HepG2 (cell line): ENCODE measurements at regions of chr10 and their contacts with region 1.

Region 1: DNA sequence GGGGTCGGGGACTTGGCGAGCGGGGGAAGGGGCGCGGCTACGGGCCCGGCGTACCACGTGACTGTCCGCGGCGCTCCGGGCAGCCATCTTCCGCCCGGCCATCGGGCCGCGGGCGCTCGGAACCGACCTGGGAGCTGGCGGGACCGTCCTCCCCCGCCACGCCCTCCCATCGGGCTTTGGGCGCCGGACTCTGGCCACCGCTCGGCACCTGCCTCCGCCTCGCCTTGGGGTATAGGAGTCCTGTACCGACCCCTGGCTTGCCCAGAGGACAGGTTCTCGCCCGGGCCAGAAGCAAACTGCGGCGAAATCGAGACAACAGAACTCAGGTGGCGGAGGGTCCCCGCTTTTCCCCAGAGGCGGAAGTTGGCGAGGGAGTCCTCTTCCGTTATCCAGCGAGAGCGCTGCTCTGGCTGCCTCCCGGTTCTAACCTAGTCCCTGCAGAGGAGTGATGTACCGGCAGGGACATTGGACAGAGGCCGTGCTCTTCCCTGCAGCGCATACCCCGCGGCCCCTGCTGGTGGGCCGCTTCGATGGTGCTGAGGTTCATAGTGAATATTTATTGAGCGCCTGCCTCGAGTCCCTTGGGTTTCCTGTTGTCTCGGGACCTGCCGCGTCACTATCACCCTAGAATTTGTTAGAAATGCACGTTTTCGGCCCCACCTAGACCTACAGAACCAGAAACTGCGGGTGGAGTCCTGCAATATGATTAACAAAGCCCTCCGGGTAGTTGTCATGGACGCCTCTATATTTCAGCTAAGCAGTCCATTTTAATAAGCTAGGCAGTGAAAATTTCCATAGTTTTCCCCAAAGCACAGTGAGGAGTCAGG is 1.3 kb upstream of the SGMS1 start:
- DNase-seq: peak; percentile 81
- ATAC-seq: peak; percentile 78
- H3K4me3 ChIP-seq: peak overlapping the region; percentile 64 to 88 (median 86)
- H3K27ac ChIP-seq: peak overlapping the region; percentile 99
- H3K4me1 ChIP-seq: peaks cover 26% of the 10 kb centered on the region
- H3K27me3 ChIP-seq: no peaks in the 10 kb centered on the region; a peak in 1 of 5 replicates
- CTCF ChIP-seq: peak; percentile 62
- EP300 ChIP-seq: no peak
- POLR2A ChIP-seq: peak; percentile 77 to 82
- RAD21 ChIP-seq: peak; percentile 44; the same call in 1 of the 2 replicates

Region 2: DNA sequence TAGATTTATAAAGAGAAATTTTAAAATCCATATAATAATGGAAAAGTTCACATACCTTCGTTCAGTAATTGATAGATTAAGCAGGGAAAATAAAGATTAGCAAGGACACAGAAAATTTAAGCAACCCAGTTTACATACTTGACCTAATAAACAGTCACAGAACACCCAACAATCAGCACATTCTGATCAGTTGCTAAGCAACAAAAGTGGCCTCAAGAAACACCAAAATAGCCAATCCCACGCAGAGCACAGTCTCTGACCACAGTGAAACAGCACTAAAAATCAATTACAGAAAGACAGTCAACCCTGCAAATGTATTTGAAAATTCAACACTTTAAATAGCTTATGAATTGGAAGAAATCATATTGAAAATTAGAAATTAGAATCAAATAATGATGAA is 1189.9 kb before region 1 on chr10:
- CTCF ChIA-PET with region 1: no interaction called
- POLR2A ChIA-PET with region 1: no interaction called
- in situ Hi-C with region 1: no loop called
- intact Hi-C with region 1: no loop called
- DNase-seq: no peak
- ATAC-seq: no peak
- H3K4me3 ChIP-seq: no peak overlapping the region
- H3K27ac ChIP-seq: no peak overlapping the region
- H3K4me1 ChIP-seq: peaks cover 10% of the 10 kb centered on the region; the same call in 1 of the 2 replicates
- H3K27me3 ChIP-seq: no peaks in the 10 kb centered on the region
- CTCF ChIP-seq: no peak
- EP300 ChIP-seq: no peak
- POLR2A ChIP-seq: no peak
- RAD21 ChIP-seq: no peak

Region 3: GRCh38 chr10:50367732-50368131 is 257.3 kb before region 1 on chr10:
- CTCF ChIA-PET with region 1: interaction called, 4 read pairs
- POLR2A ChIA-PET with region 1: no interaction called
- in situ Hi-C with region 1: no loop called
- intact Hi-C with region 1: loop called (anchors 2 kb)
- DNase-seq: peak; percentile 35
- ATAC-seq: peak; percentile 88
- H3K4me3 ChIP-seq: no peak overlapping the region
- H3K27ac ChIP-seq: no peak overlapping the region
- H3K4me1 ChIP-seq: no peaks in the 10 kb centered on the region
- H3K27me3 ChIP-seq: no peaks in the 10 kb centered on the region
- CTCF ChIP-seq: peak; percentile 72
- EP300 ChIP-seq: no peak
- POLR2A ChIP-seq: no peak
- RAD21 ChIP-seq: peak; percentile 56; the same call in 1 of the 2 replicates

Region 4: DNA sequence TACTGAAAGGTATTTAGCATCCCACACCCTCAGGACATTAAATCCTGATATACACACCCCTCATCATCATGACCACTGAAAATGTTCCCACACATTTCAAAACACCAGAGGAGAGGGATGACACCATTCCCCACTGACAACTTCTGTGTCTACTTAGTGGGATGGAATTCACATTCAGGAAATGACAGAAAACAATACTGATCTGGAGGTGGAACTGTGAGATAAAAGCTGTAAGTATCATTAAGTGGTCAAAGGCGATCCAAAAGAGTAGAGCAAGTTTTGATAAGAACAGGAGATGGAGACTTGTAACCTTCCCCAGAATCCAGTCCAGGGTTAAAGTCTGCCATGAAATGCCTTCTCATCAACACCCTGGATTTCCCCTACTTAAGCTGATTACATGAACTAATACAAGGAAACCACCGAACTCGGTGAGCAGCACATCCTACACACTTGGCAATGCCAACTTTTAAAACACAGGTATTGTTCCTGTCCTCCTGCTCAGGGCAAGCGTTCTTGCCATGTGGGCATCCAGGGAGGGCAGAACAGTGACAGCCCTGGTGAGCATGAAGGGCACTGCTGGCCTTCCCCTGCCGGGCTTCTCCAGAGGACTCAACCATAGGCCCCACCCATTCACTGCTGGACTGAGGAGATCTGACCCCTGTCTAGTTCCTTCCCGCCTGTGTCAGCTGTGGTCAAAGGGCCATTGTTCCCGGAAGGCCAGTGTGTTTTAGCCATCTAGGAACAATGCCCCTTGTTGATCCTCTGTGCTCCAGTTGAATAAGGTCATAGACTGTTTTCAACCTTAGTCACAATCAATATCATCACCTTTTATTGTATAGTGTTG is 86.3 kb before region 1 on chr10:
- CTCF ChIA-PET with region 1: no interaction called
- POLR2A ChIA-PET with region 1: interaction called, 10 read pairs
- in situ Hi-C with region 1: no loop called
- intact Hi-C with region 1: loop called (anchors 1 kb)
- DNase-seq: peak; percentile 92
- ATAC-seq: peak; percentile 99
- H3K4me3 ChIP-seq: peak overlapping the region in 1 of 3 experiments; percentile 18; a peak in 1 of 6 replicates
- H3K27ac ChIP-seq: peak overlapping the region; percentile 29
- H3K4me1 ChIP-seq: peaks cover 21% of the 10 kb centered on the region
- H3K27me3 ChIP-seq: no peaks in the 10 kb centered on the region
- CTCF ChIP-seq: peak; percentile 10; the same call in 1 of the 2 replicates
- EP300 ChIP-seq: peak in 1 of 2 experiments; percentile 55; a peak in 1 of 4 replicates
- POLR2A ChIP-seq: no peak
- RAD21 ChIP-seq: no peak

Region 5: DNA sequence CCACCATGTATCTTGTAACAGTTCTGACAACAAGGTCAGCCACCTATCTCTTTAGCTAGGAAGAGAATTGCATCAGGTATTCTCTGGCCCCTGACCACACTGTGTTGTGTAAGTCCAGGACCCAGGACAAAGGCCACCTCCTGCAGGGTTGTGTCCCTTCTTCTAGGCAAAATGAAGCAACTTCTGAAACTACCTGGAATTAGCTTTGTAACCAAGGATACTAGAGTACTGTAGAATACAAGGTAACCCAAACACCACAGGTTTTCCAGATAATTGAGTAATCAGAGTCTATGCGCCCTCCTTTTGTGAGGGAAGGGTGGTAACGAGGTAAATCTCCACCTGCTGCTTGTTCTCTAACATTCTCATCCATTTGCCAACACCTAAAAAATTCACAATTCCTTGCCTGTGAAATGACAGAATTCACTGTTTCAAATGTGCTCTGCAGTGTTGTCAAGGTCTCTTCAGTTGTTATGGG is 53.0 kb before region 1 on chr10:
- CTCF ChIA-PET with region 1: no interaction called
- POLR2A ChIA-PET with region 1: interaction called, 34 read pairs
- in situ Hi-C with region 1: no loop called
- intact Hi-C with region 1: loop called (anchors 1 kb)
- DNase-seq: peak; percentile 92
- ATAC-seq: peak; percentile 99
- H3K4me3 ChIP-seq: no peak overlapping the region; a peak in 1 of 6 replicates
- H3K27ac ChIP-seq: peak overlapping the region; percentile 92
- H3K4me1 ChIP-seq: peaks cover 47% of the 10 kb centered on the region
- H3K27me3 ChIP-seq: no peaks in the 10 kb centered on the region
- CTCF ChIP-seq: no peak
- EP300 ChIP-seq: peak; percentile 93 to 97
- POLR2A ChIP-seq: no peak
- RAD21 ChIP-seq: no peak

Region 6: GRCh38 chr10:50605269-50606263 is 19.5 kb before region 1 on chr10:
- CTCF ChIA-PET with region 1: no interaction called
- POLR2A ChIA-PET with region 1: interaction called, 27 read pairs
- in situ Hi-C with region 1: no loop called
- intact Hi-C with region 1: no loop called
- DNase-seq: peak; percentile 75
- ATAC-seq: peak; percentile 91
- H3K4me3 ChIP-seq: no peak overlapping the region
- H3K27ac ChIP-seq: peak overlapping the region; percentile 62
- H3K4me1 ChIP-seq: peaks cover 66% of the 10 kb centered on the region
- H3K27me3 ChIP-seq: no peaks in the 10 kb centered on the region
- CTCF ChIP-seq: no peak
- EP300 ChIP-seq: peak in 1 of 2 experiments; percentile 81; a peak in 2 of 4 replicates
- POLR2A ChIP-seq: no peak
- RAD21 ChIP-seq: no peak

Region 7: GRCh38 chr10:51097546-51097945 is 472.5 kb after region 1 on chr10:
- CTCF ChIA-PET with region 1: no interaction called
- POLR2A ChIA-PET with region 1: no interaction called
- in situ Hi-C with region 1: no loop called
- intact Hi-C with region 1: no loop called
- DNase-seq: no peak
- ATAC-seq: no peak
- H3K4me3 ChIP-seq: no peak overlapping the region
- H3K27ac ChIP-seq: no peak overlapping the region
- H3K4me1 ChIP-seq: no peaks in the 10 kb centered on the region
- H3K27me3 ChIP-seq: no peaks in the 10 kb centered on the region; a peak in 1 of 5 replicates
- CTCF ChIP-seq: no peak
- EP300 ChIP-seq: no peak
- POLR2A ChIP-seq: no peak
- RAD21 ChIP-seq: no peak